ENCODE measurements at regions of chr7 and their contacts with region 1.

Region 1: GRCh38 chr7:47039904-47040303 is 542.0 kb downstream of the TNS3 start:
- DNase-seq: no peak

Region 2: DNA sequence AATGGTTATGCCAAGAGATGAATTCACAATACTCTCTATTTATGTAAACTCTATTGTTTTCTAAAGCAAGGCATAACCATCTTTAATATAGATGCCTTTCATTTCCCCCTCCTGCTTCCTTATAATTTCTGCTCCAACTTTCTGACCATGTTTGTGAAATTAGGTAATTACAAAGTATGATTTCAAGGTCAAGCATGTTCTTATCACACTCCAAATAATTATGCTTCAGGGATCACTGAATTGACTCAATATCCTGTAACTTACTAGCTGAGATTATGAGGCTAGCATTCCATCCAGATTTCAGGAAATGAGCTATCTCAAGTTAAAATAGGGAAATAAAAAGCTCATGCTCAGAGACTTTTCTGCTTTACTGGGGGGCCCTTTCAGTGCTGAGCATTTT is 463.0 kb before region 1 on chr7:
- intact Hi-C with region 1: no loop called
- DNase-seq: no peak

Region 3: DNA sequence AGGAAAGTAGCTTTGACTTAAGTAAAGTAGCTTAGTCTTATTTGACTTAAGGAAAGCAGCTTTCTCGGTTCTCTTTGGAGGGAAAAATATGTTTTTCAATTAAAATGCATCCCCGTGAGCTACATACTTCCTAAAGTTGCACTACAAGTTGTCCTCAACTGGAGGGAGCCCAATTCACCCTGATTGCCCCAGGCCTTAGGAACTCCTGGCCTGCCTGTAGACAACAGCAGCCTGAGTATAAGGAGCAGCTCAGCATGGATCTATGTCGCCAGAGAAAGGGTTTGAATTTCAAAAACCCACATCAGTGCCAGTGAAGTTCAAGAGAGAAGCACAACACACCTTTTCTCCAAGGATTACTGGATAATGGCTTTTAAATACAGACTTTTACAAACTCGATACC is 230.0 kb before region 1 on chr7:
- intact Hi-C with region 1: loop called (anchors 5 kb)
- DNase-seq: no peak

Region 4: GRCh38 chr7:46839651-46840050 is 200.3 kb before region 1 on chr7:
- intact Hi-C with region 1: no loop called
- DNase-seq: no peak

Measured in cardiac septum (tissue), 1 donor.